HepG2 (cell line): ENCODE measurements at regions of chr2 and their contacts with region 1.

Region 1: DNA sequence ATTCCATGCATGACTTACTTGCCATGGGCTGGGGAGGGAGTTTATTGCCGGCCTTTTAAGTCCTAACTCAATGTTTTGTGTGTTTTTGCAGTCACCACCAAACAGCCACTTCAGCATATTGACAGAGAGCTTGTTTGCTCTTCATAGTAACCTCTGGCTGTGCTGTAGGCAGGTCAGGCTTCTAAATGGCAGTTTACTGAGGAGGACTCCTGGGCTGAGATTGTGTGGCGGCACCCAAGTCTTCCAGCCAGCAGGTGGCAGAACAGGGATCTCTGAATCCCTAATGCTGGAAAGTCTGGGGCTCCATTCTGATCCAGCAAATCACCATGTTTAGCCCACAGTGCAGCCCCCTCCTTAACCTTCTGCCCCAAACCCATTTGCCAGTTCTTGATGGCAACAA is 121.2 kb downstream of the CAPN13 start:
- DNase-seq: peak; percentile 59
- ATAC-seq: peak; percentile 97
- H3K4me3 ChIP-seq: no peak overlapping the region
- H3K27ac ChIP-seq: no peak overlapping the region
- H3K4me1 ChIP-seq: no peaks in the 10 kb centered on the region
- H3K27me3 ChIP-seq: peaks cover 0 to 29% of the 10 kb centered on the region in 2 experiments; a peak in 3 of 5 replicates
- CTCF ChIP-seq: peak; percentile 73
- EP300 ChIP-seq: no peak
- POLR2A ChIP-seq: no peak
- RAD21 ChIP-seq: no peak

Region 2: GRCh38 chr2:29714333-29714732 is 971.7 kb before region 1 on chr2:
- CTCF ChIA-PET with region 1: no interaction called
- POLR2A ChIA-PET with region 1: no interaction called
- in situ Hi-C with region 1: no loop called
- intact Hi-C with region 1: no loop called
- DNase-seq: no peak
- ATAC-seq: no peak
- H3K4me3 ChIP-seq: no peak overlapping the region
- H3K27ac ChIP-seq: no peak overlapping the region
- H3K4me1 ChIP-seq: no peaks in the 10 kb centered on the region
- H3K27me3 ChIP-seq: no peaks in the 10 kb centered on the region
- CTCF ChIP-seq: no peak
- EP300 ChIP-seq: no peak
- POLR2A ChIP-seq: no peak
- RAD21 ChIP-seq: no peak

Region 3: DNA sequence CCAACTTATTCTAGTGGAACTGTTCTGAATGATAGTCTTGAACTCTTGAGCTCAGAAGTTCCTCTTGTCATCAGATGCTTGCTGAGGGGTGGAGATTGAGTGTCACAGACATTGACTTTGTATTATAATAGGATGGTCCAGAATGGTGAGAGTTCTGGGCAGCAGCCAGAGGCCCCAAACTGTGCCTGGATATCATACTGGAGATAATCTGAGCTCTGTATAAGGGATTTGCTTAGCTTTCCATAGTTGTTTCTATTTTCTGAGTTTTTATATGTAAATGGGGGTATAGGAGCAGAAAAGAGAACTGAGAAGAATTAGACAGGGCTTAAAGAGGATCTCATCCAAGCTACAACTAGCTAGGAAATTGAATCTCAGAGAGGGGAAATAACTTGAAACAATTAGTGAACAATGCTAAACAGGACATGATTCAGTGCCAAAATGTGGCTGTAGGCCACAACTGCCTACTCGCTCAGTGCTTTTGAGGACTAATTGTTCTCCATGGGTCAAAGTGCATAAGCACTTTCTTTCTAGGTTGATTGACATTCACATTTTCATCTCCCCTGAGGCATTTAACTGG is 249.1 kb before region 1 on chr2:
- CTCF ChIA-PET with region 1: no interaction called
- POLR2A ChIA-PET with region 1: no interaction called
- in situ Hi-C with region 1: loop called (anchors 10 kb)
- intact Hi-C with region 1: no loop called
- DNase-seq: no peak
- ATAC-seq: no peak
- H3K4me3 ChIP-seq: no peak overlapping the region
- H3K27ac ChIP-seq: no peak overlapping the region
- H3K4me1 ChIP-seq: peaks cover 23% of the 10 kb centered on the region
- H3K27me3 ChIP-seq: no peaks in the 10 kb centered on the region
- CTCF ChIP-seq: no peak
- EP300 ChIP-seq: no peak
- POLR2A ChIP-seq: no peak
- RAD21 ChIP-seq: no peak

Region 4: DNA sequence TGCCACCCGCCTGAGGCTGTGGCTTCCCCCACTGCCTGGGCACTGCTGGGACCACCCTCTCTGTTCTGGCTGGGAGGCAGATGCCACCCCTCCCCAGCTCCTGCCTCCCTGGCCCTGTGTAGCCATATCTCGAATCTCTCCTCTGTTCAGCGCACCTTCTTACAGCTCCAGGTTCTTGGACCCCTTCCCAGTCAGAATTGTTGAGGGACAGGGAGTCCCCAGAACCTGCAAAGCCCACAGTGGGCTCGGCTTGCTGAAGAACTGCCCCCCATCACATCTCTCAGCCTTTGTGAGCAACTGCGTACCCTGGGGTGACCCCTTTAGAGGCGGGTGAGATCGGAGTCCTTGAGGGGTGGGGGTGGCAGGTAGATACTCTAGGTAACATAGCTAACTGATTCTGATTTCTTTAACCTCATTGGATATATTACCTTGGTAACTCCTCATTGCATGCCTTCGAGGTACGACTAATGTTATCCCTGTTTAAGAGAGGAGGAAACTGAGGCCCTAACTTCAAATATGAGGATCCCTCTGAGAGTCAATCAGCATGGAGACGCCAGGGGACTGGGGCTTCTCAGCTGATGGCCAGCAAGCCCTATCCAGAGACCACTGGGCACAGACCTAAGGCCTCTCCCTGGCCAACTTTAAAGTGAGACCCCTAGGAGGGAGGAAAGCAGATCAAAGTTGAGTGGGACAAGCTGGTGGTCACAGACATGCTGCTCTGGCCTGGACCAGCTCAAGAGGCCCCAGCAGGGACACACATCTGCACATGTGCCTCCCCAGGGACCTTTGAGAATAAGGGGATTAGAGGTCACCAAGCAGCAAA is 19.9 kb after region 1 on chr2:
- CTCF ChIA-PET with region 1: no interaction called
- POLR2A ChIA-PET with region 1: no interaction called
- in situ Hi-C with region 1: no loop called
- intact Hi-C with region 1: no loop called
- DNase-seq: no peak
- ATAC-seq: no peak
- H3K4me3 ChIP-seq: no peak overlapping the region
- H3K27ac ChIP-seq: no peak overlapping the region
- H3K4me1 ChIP-seq: no peaks in the 10 kb centered on the region
- H3K27me3 ChIP-seq: peaks cover 1 to 6% of the 10 kb centered on the region in 2 experiments; a peak in 1 of 5 replicates
- CTCF ChIP-seq: no peak
- EP300 ChIP-seq: no peak
- POLR2A ChIP-seq: no peak
- RAD21 ChIP-seq: no peak